Kidney (tissue), 22 donors: ENCODE measurements at regions of chr6 and their contacts with region 1.

Region 1: GRCh38 chr6:35449287-35449881 is 2.8 kb upstream of the FANCE start:
- DNase-seq: peak in 2 of 5 donors; percentile 80
- H3K4me3 ChIP-seq: no peak overlapping the region
- H3K27ac ChIP-seq: no peak overlapping the region
- H3K4me1 ChIP-seq: peaks cover 0 to 8% (median 5%) of the 10 kb centered on the region in 3 donors
- H3K27me3 ChIP-seq: no peaks in the 10 kb centered on the region
- CTCF ChIP-seq: peak; percentile 72

Region 2: GRCh38 chr6:35202066-35202546 is 247.3 kb before region 1 on chr6:
- intact Hi-C with region 1: no loop called
- DNase-seq: no peak
- H3K4me3 ChIP-seq: no peak overlapping the region
- H3K27ac ChIP-seq: no peak overlapping the region
- H3K4me1 ChIP-seq: peaks cover 0 to 2% (median 0%) of the 10 kb centered on the region in 3 donors
- H3K27me3 ChIP-seq: no peaks in the 10 kb centered on the region
- CTCF ChIP-seq: no peak

Region 3: GRCh38 chr6:35342258-35343091 is 106.9 kb before region 1 on chr6 and contains the start of gene PPARD:
- intact Hi-C with region 1: loop called (anchors 10 kb)
- DNase-seq: peak; percentile 98 to 100 (median 99)
- H3K4me3 ChIP-seq: peak within 1 kb of the TSS; percentile 68 to 77 (median 68)
- H3K27ac ChIP-seq: peak within 1 kb of the TSS; percentile 9 to 69
- H3K4me1 ChIP-seq: peaks cover 2 to 11% (median 6%) of the 10 kb centered on the region in 3 donors
- H3K27me3 ChIP-seq: no peaks in the 10 kb centered on the region
- CTCF ChIP-seq: peak; percentile 99
- total RNA-seq, gene PPARD: 24.4 TPM

Region 4: GRCh38 chr6:35634316-35634715 is 184.9 kb after region 1 on chr6:
- intact Hi-C with region 1: no loop called
- DNase-seq: peak in 1 of 5 donors; percentile 34
- H3K4me3 ChIP-seq: no peak overlapping the region
- H3K27ac ChIP-seq: no peak overlapping the region
- H3K4me1 ChIP-seq: peaks cover 0 to 3% (median 0%) of the 10 kb centered on the region in 3 donors
- H3K27me3 ChIP-seq: no peaks in the 10 kb centered on the region
- CTCF ChIP-seq: no peak